Common myeloid progenitor, CD34-positive (primary cell): ENCODE measurements at regions of chr15 and their contacts with region 1.

Region 1: DNA sequence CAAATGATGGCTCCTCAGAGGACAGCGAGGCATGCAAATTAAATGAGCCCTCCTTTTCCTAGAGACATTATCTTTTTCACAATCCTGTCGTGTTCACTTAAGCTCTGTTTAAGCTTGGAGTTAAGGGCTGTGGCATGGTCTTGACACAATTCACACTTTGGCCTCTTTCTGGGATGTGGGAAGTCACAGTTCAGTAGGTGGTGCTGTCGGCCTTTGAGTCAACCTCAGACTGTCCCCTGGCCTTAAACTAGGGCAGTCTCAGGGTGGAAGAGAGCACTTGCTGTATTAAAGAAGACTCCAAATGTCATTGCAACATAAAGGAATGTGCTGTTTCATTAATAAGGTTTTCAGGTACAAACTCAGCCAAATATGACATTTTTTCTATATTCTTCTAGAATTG is 351.0 kb downstream of the MCTP2 start:
- DNase-seq: peak; percentile 73 to 79 (median 75)
- H3K4me3 ChIP-seq: no peak overlapping the region
- H3K27ac ChIP-seq: no peak overlapping the region
- H3K4me1 ChIP-seq: peaks cover 9 to 31% (median 21%) of the 10 kb centered on the region in 4 experiments
- H3K27me3 ChIP-seq: peaks cover 24 to 87% (median 61%) of the 10 kb centered on the region in 5 experiments

Region 2: DNA sequence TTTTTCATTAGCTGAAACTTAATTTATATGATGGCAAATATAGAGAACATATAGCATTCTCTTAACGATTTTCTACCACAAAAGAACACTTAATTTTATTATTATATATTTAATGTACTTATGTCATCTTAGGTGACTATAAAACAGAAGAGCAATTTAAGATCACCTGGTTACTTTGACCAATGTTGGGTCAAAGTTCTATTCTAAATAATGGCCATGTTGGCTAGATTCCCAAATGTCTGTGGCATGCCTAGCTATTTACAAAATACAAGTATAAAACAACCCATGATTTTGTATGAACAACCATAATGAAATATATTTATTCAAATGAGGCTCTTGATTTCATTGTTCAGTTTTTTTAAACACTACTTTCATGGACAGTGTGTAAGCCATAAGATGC is 150.1 kb before region 1 on chr15:
- CTCF ChIA-PET with region 1: no interaction called
- POLR2A ChIA-PET with region 1: no interaction called
- DNase-seq: no peak
- H3K4me3 ChIP-seq: no peak overlapping the region
- H3K27ac ChIP-seq: no peak overlapping the region
- H3K4me1 ChIP-seq: no peaks in the 10 kb centered on the region
- H3K27me3 ChIP-seq: no peaks in the 10 kb centered on the region

Region 3: GRCh38 chr15:94561036-94561689 is 21.2 kb before region 1 on chr15:
- CTCF ChIA-PET with region 1: interaction called, 22 read pairs
- POLR2A ChIA-PET with region 1: interaction called, 4 read pairs
- DNase-seq: no peak
- H3K4me3 ChIP-seq: no peak overlapping the region
- H3K27ac ChIP-seq: no peak overlapping the region
- H3K4me1 ChIP-seq: no peaks in the 10 kb centered on the region
- H3K27me3 ChIP-seq: peaks cover 0 to 47% (median 16%) of the 10 kb centered on the region in 5 experiments

Region 4: GRCh38 chr15:94620632-94621031 is 38.3 kb after region 1 on chr15:
- CTCF ChIA-PET with region 1: interaction called, 19 read pairs
- POLR2A ChIA-PET with region 1: interaction called, 3 read pairs
- DNase-seq: no peak
- H3K4me3 ChIP-seq: no peak overlapping the region
- H3K27ac ChIP-seq: no peak overlapping the region
- H3K4me1 ChIP-seq: no peaks in the 10 kb centered on the region
- H3K27me3 ChIP-seq: peaks cover 2 to 80% (median 28%) of the 10 kb centered on the region in 5 experiments

Region 5: GRCh38 chr15:94653071-94653470 is 70.7 kb after region 1 on chr15:
- CTCF ChIA-PET with region 1: interaction called, 15 read pairs
- POLR2A ChIA-PET with region 1: no interaction called
- DNase-seq: no peak
- H3K4me3 ChIP-seq: no peak overlapping the region
- H3K27ac ChIP-seq: no peak overlapping the region
- H3K4me1 ChIP-seq: no peaks in the 10 kb centered on the region
- H3K27me3 ChIP-seq: peaks cover 2 to 79% (median 31%) of the 10 kb centered on the region in 5 experiments

Region 6: GRCh38 chr15:94700211-94700610 is 117.8 kb after region 1 on chr15:
- CTCF ChIA-PET with region 1: no interaction called
- POLR2A ChIA-PET with region 1: no interaction called
- DNase-seq: no peak
- H3K4me3 ChIP-seq: no peak overlapping the region
- H3K27ac ChIP-seq: no peak overlapping the region
- H3K4me1 ChIP-seq: no peaks in the 10 kb centered on the region
- H3K27me3 ChIP-seq: peaks cover 0 to 25% (median 3%) of the 10 kb centered on the region in 5 experiments

Region 7: DNA sequence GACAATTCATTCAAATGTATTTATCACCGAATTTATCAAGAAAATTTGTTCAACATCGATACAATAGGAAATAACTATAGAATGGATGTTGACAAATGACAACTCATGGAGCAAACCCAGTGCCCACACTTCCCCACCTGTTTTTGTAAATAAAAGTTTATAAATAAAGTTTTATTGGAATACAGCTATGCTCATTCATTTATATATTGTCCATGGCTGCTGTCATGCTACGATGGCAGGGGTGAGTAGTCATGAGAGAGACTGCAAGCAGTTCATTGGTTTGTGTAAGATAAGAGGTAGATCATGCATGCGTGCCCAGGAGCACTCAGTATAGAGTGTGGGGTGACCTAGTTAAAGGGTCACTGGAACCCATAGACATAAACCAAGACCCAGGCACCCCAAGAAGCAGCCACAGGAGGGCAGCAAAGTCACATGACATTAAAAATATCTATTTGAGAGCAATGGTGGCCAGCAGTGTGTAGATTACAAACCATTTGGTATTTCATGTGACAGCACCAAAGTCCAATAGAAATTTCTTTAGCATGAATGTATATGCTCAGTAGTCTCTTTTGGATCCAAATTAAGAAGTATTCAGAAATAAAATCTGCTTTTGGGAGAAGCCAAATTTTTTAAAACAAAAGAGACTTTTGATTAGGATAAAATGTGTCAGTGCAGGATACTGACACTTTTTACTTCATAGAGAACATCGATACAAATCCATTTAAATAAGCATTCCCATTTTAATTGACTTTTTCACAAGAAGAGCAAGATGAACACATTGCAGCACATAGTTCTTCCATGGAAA is 443.8 kb after region 1 on chr15:
- CTCF ChIA-PET with region 1: interaction called, 11 read pairs
- POLR2A ChIA-PET with region 1: no interaction called
- DNase-seq: peak; percentile 14 to 42 (median 31)
- H3K4me3 ChIP-seq: no peak overlapping the region
- H3K27ac ChIP-seq: no peak overlapping the region
- H3K4me1 ChIP-seq: no peaks in the 10 kb centered on the region
- H3K27me3 ChIP-seq: peaks cover 0 to 12% (median 0%) of the 10 kb centered on the region in 5 experiments